ENCODE measurements at regions of chr4 and their contacts with region 1.

Region 1: GRCh38 chr4:70839589-70840093 is at the start of gene GRSF1:
- DNase-seq: peak; percentile 60
- ATAC-seq: peak; percentile 86
- H3K4me3 ChIP-seq: peak within 1 kb of the TSS; percentile 85
- H3K27ac ChIP-seq: peak within 1 kb of the TSS; percentile 85
- H3K4me1 ChIP-seq: peaks cover 13% of the 10 kb centered on the region
- H3K27me3 ChIP-seq: no peaks in the 10 kb centered on the region
- CTCF ChIP-seq: peak in 1 of 3 experiments; percentile 32; a peak in 2 of 6 replicates
- EP300 ChIP-seq: no peak
- POLR2A ChIP-seq: peak; percentile 88
- RAD21 ChIP-seq: no peak
- polyA plus RNA-seq, gene GRSF1: 37.5 to 59.6 TPM

Region 2: GRCh38 chr4:70197842-70198241 is 641.8 kb before region 1 on chr4:
- CTCF ChIA-PET with region 1: no interaction called
- POLR2A ChIA-PET with region 1: no interaction called
- RAD21 ChIA-PET with region 1: no interaction called
- SMC1A ChIA-PET with region 1: no interaction called
- in situ Hi-C with region 1: no loop called
- intact Hi-C with region 1: no loop called
- DNase-seq: no peak
- ATAC-seq: no peak
- H3K4me3 ChIP-seq: no peak overlapping the region
- H3K27ac ChIP-seq: no peak overlapping the region
- H3K4me1 ChIP-seq: no peaks in the 10 kb centered on the region
- H3K27me3 ChIP-seq: no peaks in the 10 kb centered on the region
- CTCF ChIP-seq: no peak
- EP300 ChIP-seq: no peak
- POLR2A ChIP-seq: no peak
- RAD21 ChIP-seq: no peak

Region 3: GRCh38 chr4:70651864-70652506 is 187.7 kb before region 1 on chr4:
- CTCF ChIA-PET with region 1: interaction called, 4 read pairs
- POLR2A ChIA-PET with region 1: no interaction called
- RAD21 ChIA-PET with region 1: no interaction called
- SMC1A ChIA-PET with region 1: no interaction called
- in situ Hi-C with region 1: no loop called
- intact Hi-C with region 1: loop called (anchors 5 kb)
- DNase-seq: no peak
- ATAC-seq: peak; percentile 68
- H3K4me3 ChIP-seq: no peak overlapping the region
- H3K27ac ChIP-seq: no peak overlapping the region
- H3K4me1 ChIP-seq: no peaks in the 10 kb centered on the region
- H3K27me3 ChIP-seq: no peaks in the 10 kb centered on the region
- CTCF ChIP-seq: peak; percentile 20 to 60 (median 52); a peak in 4 of 6 replicates
- EP300 ChIP-seq: no peak
- POLR2A ChIP-seq: no peak
- RAD21 ChIP-seq: peak; percentile 72

Region 4: DNA sequence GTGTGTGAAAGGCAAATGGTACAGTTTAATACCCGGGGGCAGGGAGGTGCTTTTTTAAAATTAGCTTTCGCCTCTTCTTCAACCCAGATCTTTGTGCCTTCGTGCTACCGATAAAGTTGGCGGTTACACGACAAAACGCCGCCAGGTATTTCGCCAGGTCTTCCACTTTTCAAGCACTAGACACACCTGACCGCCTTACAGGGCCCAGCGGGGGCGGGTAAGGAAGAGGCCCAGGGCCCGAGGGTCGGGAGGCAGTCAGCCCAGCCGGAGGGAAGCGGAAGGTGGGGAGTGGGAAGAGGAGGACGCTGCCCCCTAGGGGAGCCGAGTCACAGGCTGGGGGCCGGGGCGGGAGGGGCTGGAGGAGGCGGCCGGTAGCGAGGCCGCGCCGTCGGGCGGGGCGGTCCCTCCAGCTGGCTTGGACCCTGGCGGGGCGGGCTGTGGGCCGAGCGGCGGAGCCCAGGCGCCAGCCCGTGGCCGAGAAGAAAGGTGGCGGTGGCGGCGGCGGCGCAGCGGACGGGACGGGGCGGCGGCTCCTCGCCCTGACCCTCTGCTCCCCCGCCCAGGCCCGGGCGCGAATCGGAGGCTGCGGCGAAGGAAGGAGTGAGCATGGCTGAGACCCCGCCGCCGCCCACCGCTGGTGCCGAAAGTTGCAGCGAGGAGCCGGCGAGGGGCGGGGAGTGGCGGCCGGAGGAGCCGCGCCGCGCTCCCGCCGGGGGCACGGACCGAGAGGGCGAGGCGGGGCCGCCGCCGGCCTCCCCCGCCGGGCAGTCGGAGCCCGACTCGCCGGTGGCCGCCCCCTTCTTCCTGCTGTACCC is 135.1 kb before region 1 on chr4:
- CTCF ChIA-PET with region 1: interaction called, 4 read pairs
- POLR2A ChIA-PET with region 1: interaction called, 6 read pairs
- RAD21 ChIA-PET with region 1: interaction called, 4 read pairs
- SMC1A ChIA-PET with region 1: interaction called, 3 read pairs
- in situ Hi-C with region 1: no loop called
- intact Hi-C with region 1: loop called (anchors 5 kb)
- DNase-seq: no peak
- ATAC-seq: peak; percentile 77
- H3K4me3 ChIP-seq: peak overlapping the region; percentile 92
- H3K27ac ChIP-seq: peak overlapping the region; percentile 50
- H3K4me1 ChIP-seq: no peaks in the 10 kb centered on the region; the same call in 1 of the 2 replicates
- H3K27me3 ChIP-seq: no peaks in the 10 kb centered on the region
- CTCF ChIP-seq: peak; percentile 28 to 47 (median 47); a peak in 4 of 6 replicates
- EP300 ChIP-seq: no peak
- POLR2A ChIP-seq: peak; percentile 18; the same call in 1 of the 2 replicates
- RAD21 ChIP-seq: peak; percentile 32; the same call in 1 of the 2 replicates

Region 5: DNA sequence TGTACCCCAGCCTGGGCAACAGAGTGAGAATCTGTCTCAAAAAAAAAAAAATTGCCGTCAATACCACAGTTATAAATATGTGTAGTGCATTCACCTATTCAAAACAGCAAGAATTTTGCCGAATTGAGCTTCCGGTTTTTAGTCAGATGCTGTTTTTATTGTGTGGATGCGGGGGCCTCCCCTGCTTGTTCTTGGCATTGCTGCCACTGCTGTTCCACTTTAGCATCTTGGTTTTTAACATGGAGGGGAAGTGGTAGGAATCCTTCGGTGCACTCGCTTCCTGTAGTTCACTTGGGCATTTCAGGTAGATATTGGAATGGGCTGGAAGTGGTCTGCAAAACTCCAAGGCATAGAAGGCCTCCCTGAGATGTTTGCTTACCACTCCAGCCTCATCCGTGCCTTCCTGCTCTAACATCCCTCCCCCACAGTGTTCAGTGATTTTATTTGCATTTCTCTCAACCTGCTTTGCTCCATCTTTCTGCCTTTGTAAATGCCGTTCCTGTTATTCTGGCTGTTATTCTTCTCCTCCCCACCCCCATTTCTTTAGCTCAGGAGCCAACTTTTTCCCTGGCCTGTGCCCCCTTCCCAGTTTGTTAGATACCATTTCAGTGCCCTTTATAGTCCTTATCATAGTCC is 88.0 kb after region 1 on chr4:
- CTCF ChIA-PET with region 1: interaction called, 3 read pairs
- POLR2A ChIA-PET with region 1: interaction called, 3 read pairs
- RAD21 ChIA-PET with region 1: interaction called, 7 read pairs
- SMC1A ChIA-PET with region 1: interaction called, 5 read pairs
- in situ Hi-C with region 1: no loop called
- intact Hi-C with region 1: loop called (anchors 5 kb)
- DNase-seq: no peak
- ATAC-seq: peak; percentile 56
- H3K4me3 ChIP-seq: peak overlapping the region; percentile 43; the same call in 1 of the 2 replicates
- H3K27ac ChIP-seq: peak overlapping the region; percentile 54
- H3K4me1 ChIP-seq: peaks cover 36% of the 10 kb centered on the region
- H3K27me3 ChIP-seq: no peaks in the 10 kb centered on the region
- CTCF ChIP-seq: peak in 2 of 3 experiments; percentile 14 to 35; a peak in 3 of 6 replicates
- EP300 ChIP-seq: no peak
- POLR2A ChIP-seq: no peak
- RAD21 ChIP-seq: peak; percentile 36; the same call in 1 of the 2 replicates

Region 6: DNA sequence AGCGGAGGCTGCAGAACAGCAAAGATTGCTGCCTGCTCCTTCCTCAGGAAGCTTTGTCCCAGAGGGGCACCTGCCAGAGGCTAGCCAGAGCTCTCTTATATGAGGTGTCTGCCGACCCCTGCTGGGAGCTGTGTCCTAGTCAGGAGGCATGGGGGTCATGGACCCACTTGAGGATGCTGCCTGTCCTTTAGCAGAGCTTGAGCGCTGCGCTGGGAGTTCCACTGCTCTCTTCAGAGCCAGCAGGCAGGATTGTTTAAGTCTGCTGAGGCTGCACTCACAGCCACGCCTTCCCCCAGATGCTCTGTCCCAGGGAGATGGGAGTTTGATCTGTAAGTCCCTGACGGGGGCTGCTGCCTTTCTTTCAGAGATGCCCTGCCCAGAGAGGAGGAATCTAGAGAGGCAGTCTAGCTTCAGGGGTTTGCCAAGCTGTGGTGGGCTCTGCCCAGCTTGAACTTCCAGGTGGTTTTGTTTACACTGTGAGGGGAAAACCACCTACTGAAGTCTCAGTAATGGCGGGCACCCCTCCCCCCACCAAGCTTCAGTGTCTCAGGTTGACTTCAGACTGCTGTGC is 164.7 kb after region 1 on chr4:
- CTCF ChIA-PET with region 1: interaction called, 4 read pairs
- POLR2A ChIA-PET with region 1: interaction called, 3 read pairs
- RAD21 ChIA-PET with region 1: interaction called, 13 read pairs
- SMC1A ChIA-PET with region 1: interaction called, 11 read pairs
- in situ Hi-C with region 1: no loop called
- intact Hi-C with region 1: loop called (anchors 2 kb)
- DNase-seq: no peak
- ATAC-seq: peak; percentile 74
- H3K4me3 ChIP-seq: peak overlapping the region; percentile 45; the same call in 1 of the 2 replicates
- H3K27ac ChIP-seq: peak overlapping the region; percentile 24; the same call in 1 of the 2 replicates
- H3K4me1 ChIP-seq: peaks cover 9% of the 10 kb centered on the region
- H3K27me3 ChIP-seq: no peaks in the 10 kb centered on the region
- CTCF ChIP-seq: peak in 1 of 3 experiments; percentile 26; a peak in 1 of 6 replicates
- EP300 ChIP-seq: no peak
- POLR2A ChIP-seq: no peak
- RAD21 ChIP-seq: peak; percentile 47